ENCODE measurements at regions of chr2 and their contacts with region 1.

Region 1: GRCh38 chr2:118333664-118334063 is 245.4 kb downstream of the INSIG2 start:
- DNase-seq: no peak
- H3K4me3 ChIP-seq: no peak overlapping the region
- H3K27ac ChIP-seq: no peak overlapping the region
- H3K4me1 ChIP-seq: no peaks in the 10 kb centered on the region
- H3K27me3 ChIP-seq: no peaks in the 10 kb centered on the region
- CTCF ChIP-seq: no peak

Region 2: GRCh38 chr2:117985092-117985491 is 348.6 kb before region 1 on chr2:
- CTCF ChIA-PET with region 1: no interaction called
- POLR2A ChIA-PET with region 1: interaction called, 13 read pairs
- intact Hi-C with region 1: no loop called
- DNase-seq: no peak
- H3K4me3 ChIP-seq: no peak overlapping the region
- H3K27ac ChIP-seq: no peak overlapping the region
- H3K4me1 ChIP-seq: peaks cover 14% of the 10 kb centered on the region
- H3K27me3 ChIP-seq: no peaks in the 10 kb centered on the region
- CTCF ChIP-seq: no peak

Measured in PC-9 (cell line).